Calu3 (cell line): ENCODE measurements at regions of chr7 and their contacts with region 1.

Region 1: DNA sequence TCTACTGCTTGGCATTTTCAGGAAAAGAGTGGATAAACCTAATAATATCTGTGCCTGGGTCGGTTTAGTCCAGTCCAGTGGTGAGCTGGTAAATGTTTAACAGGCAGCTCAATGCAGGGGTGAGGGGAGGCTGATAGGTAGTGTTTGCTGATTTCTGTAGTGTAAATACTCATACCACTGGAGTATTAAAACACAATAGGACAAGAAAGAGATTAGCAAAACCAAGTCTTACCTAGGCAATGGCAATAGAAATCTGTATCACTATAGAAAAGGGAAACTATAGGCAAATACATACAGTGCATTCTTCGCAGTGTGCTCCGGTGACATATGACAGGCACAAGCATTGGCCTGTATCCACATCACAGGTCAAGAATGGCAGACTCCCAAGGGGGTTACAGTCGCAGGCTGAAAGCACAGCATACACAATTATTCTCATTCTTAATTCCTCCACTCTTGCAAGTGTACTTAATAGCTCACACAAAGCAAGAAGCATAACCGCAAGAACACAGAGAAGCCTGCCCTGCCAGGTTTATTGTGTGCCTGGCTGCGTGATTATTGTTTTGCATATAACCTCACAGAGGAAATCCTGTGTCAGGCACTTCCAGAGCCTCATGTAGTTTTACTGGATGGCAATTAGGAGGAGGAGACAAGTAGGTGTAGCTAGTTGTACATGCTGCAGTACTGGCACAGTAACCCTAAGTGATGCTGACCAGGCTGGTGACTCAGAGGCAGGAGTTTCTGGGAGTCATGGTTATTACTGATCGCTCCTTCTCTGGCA is 35.0 kb downstream of the LAMB4 start:
- DNase-seq: peak; percentile 44
- H3K4me3 Mint-ChIP-seq: no peak overlapping the region
- H3K27ac Mint-ChIP-seq: peak overlapping the region; percentile 64
- H3K4me1 Mint-ChIP-seq: peaks cover 25% of the 10 kb centered on the region
- H3K27me3 Mint-ChIP-seq: no peaks in the 10 kb centered on the region
- CTCF ChIP-seq: no peak

Region 2: DNA sequence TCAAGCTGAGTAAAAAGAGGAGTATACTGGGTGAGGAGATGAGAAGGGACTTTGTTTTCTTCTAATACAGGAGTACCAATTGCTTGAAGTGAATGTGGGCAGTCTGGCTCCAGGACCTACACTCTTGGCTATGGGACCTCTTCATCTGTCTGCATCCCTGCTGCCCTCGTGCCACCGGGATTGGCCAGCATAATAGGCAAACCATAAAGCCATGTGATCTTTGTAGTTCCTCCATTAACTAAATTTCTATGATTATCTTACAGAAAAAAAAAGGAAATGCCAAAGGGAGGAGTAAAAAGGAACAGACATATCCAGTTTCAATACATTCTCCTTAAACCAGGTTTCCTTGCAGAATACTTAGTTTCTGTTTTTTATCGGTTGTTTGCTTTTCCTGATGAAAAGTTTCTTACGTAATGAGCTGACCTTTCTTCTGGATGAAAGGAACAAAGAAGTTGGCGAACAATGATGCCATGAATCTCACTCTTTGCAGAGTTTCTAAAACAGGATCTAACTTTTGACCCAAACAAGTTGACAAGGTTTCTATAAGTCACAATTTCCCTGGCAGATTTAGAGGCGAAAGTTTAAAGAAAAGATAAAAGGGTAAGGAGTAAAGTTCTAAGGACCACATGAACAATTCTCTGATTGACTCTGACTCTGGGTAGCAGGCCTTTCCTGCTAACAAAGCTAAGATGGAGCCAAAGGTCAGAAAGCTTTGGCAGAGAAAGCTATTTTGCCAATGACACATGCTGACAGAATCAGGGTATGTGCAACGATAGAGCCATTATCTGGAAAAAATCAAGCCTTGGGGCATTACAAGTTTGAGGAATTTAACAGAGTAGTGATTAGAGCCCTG is 146.3 kb before region 1 on chr7:
- CTCF ChIA-PET with region 1: no interaction called
- intact Hi-C with region 1: loop called (anchors 5 kb)
- DNase-seq: peak; percentile 56
- H3K4me3 Mint-ChIP-seq: peak overlapping the region; percentile 8
- H3K27ac Mint-ChIP-seq: peak overlapping the region; percentile 84
- H3K4me1 Mint-ChIP-seq: peaks cover 35% of the 10 kb centered on the region
- H3K27me3 Mint-ChIP-seq: no peaks in the 10 kb centered on the region
- CTCF ChIP-seq: no peak

Region 3: DNA sequence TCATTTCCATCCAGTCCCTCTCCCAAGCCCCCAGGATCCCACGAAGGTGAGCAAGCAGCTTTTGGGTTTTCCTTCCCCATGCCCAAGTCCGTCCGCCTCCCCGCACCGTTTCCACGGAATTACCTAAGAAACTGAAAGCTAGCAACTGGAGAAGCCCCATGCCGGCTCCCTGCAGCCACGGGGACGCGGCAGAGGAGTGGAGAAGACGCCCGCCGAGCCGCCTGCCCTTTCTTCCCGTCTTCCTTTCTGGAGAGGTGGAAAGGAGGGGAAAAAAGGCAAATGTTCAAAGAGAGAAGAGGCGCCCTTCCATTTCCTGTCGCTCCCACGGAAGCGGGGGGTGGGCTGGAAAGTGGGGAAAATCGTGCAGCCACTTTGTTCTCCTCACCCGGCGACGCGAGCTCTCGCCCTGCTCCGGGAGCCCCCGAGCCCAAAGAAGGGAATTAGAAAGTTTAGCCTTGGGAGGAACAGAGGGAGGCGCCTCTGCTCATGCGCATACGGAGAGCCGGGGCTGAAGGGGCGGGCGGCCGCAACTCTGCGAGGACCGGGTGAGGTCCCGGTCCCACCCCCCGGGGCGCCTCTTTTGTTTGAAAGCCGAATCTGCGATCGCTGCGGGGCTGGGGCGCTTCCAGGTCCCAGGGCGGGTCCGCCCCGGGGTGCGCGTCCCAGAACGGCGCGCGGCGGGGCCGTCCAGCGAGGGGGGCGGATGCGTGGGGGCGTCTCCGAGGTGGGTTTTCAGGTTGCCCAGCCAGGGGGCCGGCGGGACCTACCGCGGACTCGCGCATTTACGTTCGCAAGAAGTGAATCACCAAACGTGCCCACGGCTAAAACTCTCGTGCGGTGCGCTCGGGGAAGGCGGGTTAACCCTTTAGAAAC is 92.2 kb before region 1 on chr7 and contains the start of gene LAMB1:
- CTCF ChIA-PET with region 1: interaction called, 4 read pairs
- intact Hi-C with region 1: loop called (anchors 5 kb)
- DNase-seq: peak; percentile 79
- H3K4me3 Mint-ChIP-seq: peak within 1 kb of the TSS; percentile 90
- H3K27ac Mint-ChIP-seq: peak within 1 kb of the TSS; percentile 86
- H3K4me1 Mint-ChIP-seq: peaks cover 52% of the 10 kb centered on the region
- H3K27me3 Mint-ChIP-seq: no peaks in the 10 kb centered on the region
- CTCF ChIP-seq: no peak
- total RNA-seq, gene LAMB1: 181 and 240 TPM in 2 replicates

Region 4: GRCh38 chr7:108016841-108017775 is 78.0 kb before region 1 on chr7:
- CTCF ChIA-PET with region 1: interaction called, 5 read pairs
- intact Hi-C with region 1: loop called (anchors 5 kb)
- DNase-seq: no peak
- H3K4me3 Mint-ChIP-seq: no peak overlapping the region
- H3K27ac Mint-ChIP-seq: no peak overlapping the region
- H3K4me1 Mint-ChIP-seq: peaks cover 22% of the 10 kb centered on the region
- H3K27me3 Mint-ChIP-seq: no peaks in the 10 kb centered on the region
- CTCF ChIP-seq: peak; percentile 34

Region 5: DNA sequence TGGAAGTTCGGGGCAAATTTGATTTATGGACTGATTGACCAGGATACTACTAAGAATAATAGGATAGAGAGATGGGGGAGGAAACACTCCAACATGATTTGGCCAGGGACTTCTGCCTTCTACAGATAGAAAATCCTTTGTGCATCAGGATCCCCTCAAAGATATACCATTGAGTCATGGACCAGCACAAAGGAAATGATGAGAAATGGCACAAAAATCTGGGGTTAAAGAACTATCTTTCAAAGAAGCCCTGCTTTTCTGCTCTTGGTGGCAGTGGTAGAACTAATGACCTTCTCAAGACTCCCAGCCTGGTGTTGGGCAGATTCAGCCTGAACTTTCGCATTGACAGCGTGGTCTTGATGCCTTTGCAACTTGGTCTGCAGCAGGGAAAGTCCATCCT is 64.6 kb before region 1 on chr7:
- CTCF ChIA-PET with region 1: no interaction called
- intact Hi-C with region 1: loop called (anchors 5 kb)
- DNase-seq: no peak
- H3K4me3 Mint-ChIP-seq: no peak overlapping the region
- H3K27ac Mint-ChIP-seq: no peak overlapping the region
- H3K4me1 Mint-ChIP-seq: peaks cover 16% of the 10 kb centered on the region
- H3K27me3 Mint-ChIP-seq: no peaks in the 10 kb centered on the region
- CTCF ChIP-seq: no peak

Region 6: GRCh38 chr7:108368466-108368865 is 273.3 kb after region 1 on chr7:
- CTCF ChIA-PET with region 1: no interaction called
- intact Hi-C with region 1: no loop called
- DNase-seq: no peak
- H3K4me3 Mint-ChIP-seq: no peak overlapping the region
- H3K27ac Mint-ChIP-seq: no peak overlapping the region
- H3K4me1 Mint-ChIP-seq: no peaks in the 10 kb centered on the region
- H3K27me3 Mint-ChIP-seq: no peaks in the 10 kb centered on the region
- CTCF ChIP-seq: no peak

Region 7: DNA sequence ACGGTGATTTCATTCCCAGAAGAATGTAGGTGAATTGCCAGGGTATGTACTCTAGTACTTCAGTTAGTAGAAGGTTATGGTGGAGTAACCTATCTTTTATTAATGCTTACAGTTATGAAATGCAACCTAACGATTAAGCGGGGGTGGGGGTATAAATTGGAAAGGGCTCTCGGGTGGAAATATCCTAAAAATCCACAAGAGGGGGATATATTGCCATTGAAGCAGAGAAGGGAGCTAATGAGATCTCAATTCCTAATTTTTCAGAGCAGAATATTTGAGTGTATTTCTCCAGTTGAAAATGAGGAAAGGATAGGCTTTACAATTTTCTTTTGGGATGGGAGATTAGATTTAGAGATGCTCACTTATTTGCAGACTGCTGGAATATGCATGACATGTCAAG is 565.3 kb after region 1 on chr7:
- CTCF ChIA-PET with region 1: no interaction called
- intact Hi-C with region 1: no loop called
- DNase-seq: peak; percentile 2
- H3K4me3 Mint-ChIP-seq: no peak overlapping the region
- H3K27ac Mint-ChIP-seq: no peak overlapping the region
- H3K4me1 Mint-ChIP-seq: no peaks in the 10 kb centered on the region
- H3K27me3 Mint-ChIP-seq: peaks cover 23% of the 10 kb centered on the region
- CTCF ChIP-seq: no peak